ENCODE measurements at regions of chr1 and their contacts with region 1.

Region 1: GRCh38 chr1:112390775-112391602 is 5.0 kb upstream of the CTTNBP2NL start:
- DNase-seq: peak; percentile 89
- H3K4me3 ChIP-seq: peak overlapping the region; percentile 54
- H3K27ac ChIP-seq: no peak overlapping the region
- H3K4me1 ChIP-seq: peaks cover 24% of the 10 kb centered on the region
- CTCF ChIP-seq: peak; percentile 95

Region 2: DNA sequence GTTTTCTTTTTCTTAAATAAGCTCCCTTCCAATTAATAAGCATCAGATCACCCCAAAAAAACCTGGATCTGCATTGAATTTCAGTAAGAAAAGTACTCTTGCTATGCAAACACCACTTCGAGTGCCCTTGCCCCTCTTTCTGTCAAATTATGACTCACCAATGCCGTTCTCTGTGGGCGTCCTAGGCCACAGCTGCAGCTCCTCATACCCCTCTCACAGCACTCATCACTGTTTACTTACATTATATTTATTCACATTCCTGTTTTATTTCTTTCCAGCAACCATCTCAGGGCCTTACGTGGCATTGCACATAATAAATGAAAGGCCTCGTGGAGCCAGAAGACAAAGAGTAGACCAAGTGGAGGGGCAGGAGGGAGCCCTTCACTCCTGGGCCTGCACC is 94.1 kb before region 1 on chr1:
- CTCF ChIA-PET with region 1: no interaction called
- POLR2A ChIA-PET with region 1: no interaction called
- intact Hi-C with region 1: no loop called
- DNase-seq: no peak
- H3K4me3 ChIP-seq: no peak overlapping the region
- H3K27ac ChIP-seq: no peak overlapping the region
- H3K4me1 ChIP-seq: no peaks in the 10 kb centered on the region
- CTCF ChIP-seq: no peak

Region 3: DNA sequence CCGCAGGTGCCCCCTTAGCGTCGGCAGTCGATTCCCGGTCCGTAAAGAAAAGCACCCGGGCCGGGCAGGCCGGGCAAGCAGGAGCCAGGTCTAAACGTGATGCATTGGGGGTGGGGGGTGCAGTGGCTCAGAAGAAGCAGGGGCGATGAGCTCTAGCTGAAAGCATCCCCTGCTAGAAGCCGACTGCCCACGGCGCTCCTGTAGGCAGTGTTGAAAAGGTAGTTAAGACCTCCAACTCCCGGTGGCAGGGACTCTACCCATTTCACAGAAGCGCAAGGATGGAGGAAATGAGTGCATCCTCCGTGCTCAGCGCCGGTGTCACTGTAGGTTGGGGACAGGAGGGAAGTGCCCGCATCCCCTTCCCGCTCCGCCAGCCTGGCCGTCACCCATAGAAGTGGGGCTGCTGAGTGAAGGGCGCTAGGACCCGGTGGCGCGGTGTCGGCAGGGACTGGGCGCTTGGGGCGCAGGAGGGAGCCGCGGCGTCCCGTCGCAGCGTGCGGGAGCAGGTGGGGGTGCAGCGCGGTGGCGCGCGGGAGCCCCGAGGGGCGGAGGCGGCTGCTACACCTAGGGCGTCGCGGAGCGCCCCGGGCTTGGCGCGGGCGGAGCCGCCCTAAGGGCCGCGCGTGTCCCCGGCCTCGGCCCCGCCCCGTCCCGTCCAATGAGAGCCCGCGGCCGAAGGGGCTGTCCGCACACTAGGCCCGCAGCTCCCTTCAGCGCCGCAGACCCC is 117.5 kb after region 1 on chr1 and contains the start of gene WNT2B:
- CTCF ChIA-PET with region 1: interaction called, 4 read pairs
- POLR2A ChIA-PET with region 1: interaction called, 9 read pairs
- intact Hi-C with region 1: loop called (anchors 2 kb)
- DNase-seq: peak; percentile 55
- H3K4me3 ChIP-seq: peak within 1 kb of the TSS; percentile 68
- H3K27ac ChIP-seq: no peak within 1 kb of the TSS
- H3K4me1 ChIP-seq: peaks cover 42% of the 10 kb centered on the region
- CTCF ChIP-seq: no peak
- total RNA-seq, gene WNT2B: 0.32 and 0.39 TPM in 2 replicates

Region 4: GRCh38 chr1:112643080-112643479 is 252.1 kb after region 1 on chr1:
- CTCF ChIA-PET with region 1: no interaction called
- POLR2A ChIA-PET with region 1: no interaction called
- intact Hi-C with region 1: no loop called
- DNase-seq: no peak
- H3K4me3 ChIP-seq: no peak overlapping the region
- H3K27ac ChIP-seq: no peak overlapping the region
- H3K4me1 ChIP-seq: no peaks in the 10 kb centered on the region
- CTCF ChIP-seq: no peak

Region 5: GRCh38 chr1:112674439-112674985 is 283.5 kb after region 1 on chr1 and contains the start of gene MOV10:
- CTCF ChIA-PET with region 1: no interaction called
- POLR2A ChIA-PET with region 1: interaction called, 3 read pairs
- intact Hi-C with region 1: loop called (anchors 10 kb)
- DNase-seq: peak; percentile 63
- H3K4me3 ChIP-seq: peak within 1 kb of the TSS; percentile 82
- H3K27ac ChIP-seq: peak within 1 kb of the TSS; percentile 28
- H3K4me1 ChIP-seq: peaks cover 32% of the 10 kb centered on the region
- CTCF ChIP-seq: no peak
- total RNA-seq, gene MOV10: 24.4 and 28.2 TPM in 2 replicates

Region 6: GRCh38 chr1:112715264-112716053 is 324.5 kb after region 1 on chr1 and contains the start of gene PPM1J:
- CTCF ChIA-PET with region 1: interaction called, 3 read pairs
- POLR2A ChIA-PET with region 1: interaction called, 6 read pairs
- intact Hi-C with region 1: loop called (anchors 2 kb)
- DNase-seq: peak; percentile 94
- H3K4me3 ChIP-seq: peak within 1 kb of the TSS; percentile 78
- H3K27ac ChIP-seq: no peak within 1 kb of the TSS
- H3K4me1 ChIP-seq: peaks cover 20% of the 10 kb centered on the region
- CTCF ChIP-seq: no peak
- total RNA-seq, gene PPM1J: 1.4 and 1.5 TPM in 2 replicates

Region 7: GRCh38 chr1:112955781-112956543 is 565.0 kb after region 1 on chr1 and contains the start of gene SLC16A1:
- CTCF ChIA-PET with region 1: no interaction called
- POLR2A ChIA-PET with region 1: no interaction called
- intact Hi-C with region 1: loop called (anchors 10 kb)
- DNase-seq: peak; percentile 94
- H3K4me3 ChIP-seq: peak within 1 kb of the TSS; percentile 88
- H3K27ac ChIP-seq: peak within 1 kb of the TSS; percentile 87
- H3K4me1 ChIP-seq: peaks cover 45% of the 10 kb centered on the region
- CTCF ChIP-seq: peak; percentile 35; the same call in 1 of the 2 replicates
- total RNA-seq, gene SLC16A1: 50.9 and 56.1 TPM in 2 replicates

Measured in OCI-LY7 (cell line).